Activated CD4-positive, alpha-beta T cell treated with anti-CD3 and anti-CD28 coated beads, Interleukin-2, amount 10 ng/mL, durations not matched to agents 24 days and 14 days (primary cell): ENCODE measurements at regions of chr12 and their contacts with region 1.

Region 1: GRCh38 chr12:108950991-108951739 is 69.7 kb downstream of the SVOP start:
- DNase-seq: peak; percentile 90
- H3K4me3 Mint-ChIP-seq: no peak overlapping the region
- H3K27ac Mint-ChIP-seq: no peak overlapping the region
- H3K4me1 Mint-ChIP-seq: no peaks in the 10 kb centered on the region
- H3K27me3 Mint-ChIP-seq: peaks cover 14% of the 10 kb centered on the region

Region 2: DNA sequence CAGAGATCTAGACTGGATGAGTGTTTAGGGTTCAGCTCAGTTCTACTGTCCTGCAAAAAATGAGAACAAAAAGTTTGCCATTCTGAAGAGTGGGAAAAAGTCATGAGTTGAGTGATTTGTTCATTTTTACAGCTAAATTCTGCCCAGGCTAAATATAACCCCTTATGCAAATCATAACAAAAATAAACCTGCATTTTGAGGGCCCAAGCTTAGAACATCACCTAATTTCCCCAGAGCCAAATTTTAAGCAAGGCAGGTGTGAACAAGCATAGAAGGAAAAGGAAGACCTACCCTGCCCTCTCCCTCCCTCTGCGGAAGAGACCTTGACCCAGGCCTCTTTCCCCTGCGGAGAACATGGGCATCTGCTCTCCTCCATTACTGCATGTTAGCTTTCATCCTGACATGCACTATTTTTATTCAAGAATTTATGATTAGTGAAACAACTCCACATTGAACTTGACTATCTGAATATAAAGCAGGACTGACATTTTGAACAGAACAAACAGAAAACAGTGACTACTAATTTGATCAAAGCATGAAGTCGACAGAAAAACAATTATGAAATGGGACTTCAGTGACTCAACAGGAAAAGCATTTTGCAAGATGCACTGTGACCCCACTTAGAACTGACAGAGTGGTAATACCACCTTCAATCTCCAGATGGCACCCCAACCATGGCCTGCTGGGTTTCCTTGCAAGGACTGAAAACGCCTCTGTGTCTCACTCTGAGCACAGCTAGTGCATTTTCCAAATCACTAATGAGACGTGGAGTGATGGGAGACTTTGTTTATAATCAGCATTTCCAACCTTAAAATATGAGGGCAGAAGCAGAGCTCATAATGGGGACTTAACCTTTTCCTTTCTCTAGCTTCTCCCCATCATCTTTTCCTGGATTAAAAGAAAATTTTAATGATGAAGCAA is 286.6 kb before region 1 on chr12:
- intact Hi-C with region 1: loop called (anchors 1 kb)
- DNase-seq: peak; percentile 95
- H3K4me3 Mint-ChIP-seq: peak overlapping the region; percentile 58
- H3K27ac Mint-ChIP-seq: peak overlapping the region; percentile 77
- H3K4me1 Mint-ChIP-seq: peaks cover 15% of the 10 kb centered on the region
- H3K27me3 Mint-ChIP-seq: no peaks in the 10 kb centered on the region

Region 3: DNA sequence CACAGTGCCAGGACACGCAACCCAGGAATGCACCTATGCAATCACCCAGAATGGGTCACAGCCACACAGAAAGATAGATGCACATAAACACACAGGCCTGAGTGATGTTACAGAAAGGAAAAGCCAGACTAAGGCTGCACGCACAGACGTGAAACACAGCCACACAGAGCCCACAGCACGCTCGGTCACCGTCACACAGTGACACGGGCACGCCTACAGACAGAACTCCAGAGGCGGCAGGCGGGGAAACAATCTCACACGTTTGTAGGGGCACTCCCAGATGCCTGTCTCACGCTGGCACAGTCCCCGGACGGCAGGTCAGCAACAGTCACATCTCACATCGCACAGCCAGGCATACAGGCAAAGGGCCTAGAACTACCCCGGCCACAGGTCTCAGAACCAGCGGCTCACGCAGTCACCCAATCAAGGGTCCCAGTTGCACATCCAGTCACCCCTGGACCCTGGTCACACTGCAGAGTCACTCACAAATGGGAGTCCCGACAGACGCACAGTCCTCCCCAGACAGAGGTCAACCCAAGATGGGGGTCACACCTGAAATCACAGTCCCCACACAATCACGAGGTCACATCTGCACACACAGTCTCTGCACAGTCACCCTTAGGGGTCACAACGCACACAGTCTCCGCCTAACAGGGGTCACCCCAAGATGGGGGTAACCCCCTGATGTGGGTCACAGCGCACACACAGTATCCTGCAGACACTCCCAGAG is 94.6 kb before region 1 on chr12:
- intact Hi-C with region 1: no loop called
- DNase-seq: peak; percentile 84
- H3K4me3 Mint-ChIP-seq: peak overlapping the region; percentile 91
- H3K27ac Mint-ChIP-seq: peak overlapping the region; percentile 84
- H3K4me1 Mint-ChIP-seq: peaks cover 43% of the 10 kb centered on the region
- H3K27me3 Mint-ChIP-seq: peaks cover 1% of the 10 kb centered on the region

Region 4: DNA sequence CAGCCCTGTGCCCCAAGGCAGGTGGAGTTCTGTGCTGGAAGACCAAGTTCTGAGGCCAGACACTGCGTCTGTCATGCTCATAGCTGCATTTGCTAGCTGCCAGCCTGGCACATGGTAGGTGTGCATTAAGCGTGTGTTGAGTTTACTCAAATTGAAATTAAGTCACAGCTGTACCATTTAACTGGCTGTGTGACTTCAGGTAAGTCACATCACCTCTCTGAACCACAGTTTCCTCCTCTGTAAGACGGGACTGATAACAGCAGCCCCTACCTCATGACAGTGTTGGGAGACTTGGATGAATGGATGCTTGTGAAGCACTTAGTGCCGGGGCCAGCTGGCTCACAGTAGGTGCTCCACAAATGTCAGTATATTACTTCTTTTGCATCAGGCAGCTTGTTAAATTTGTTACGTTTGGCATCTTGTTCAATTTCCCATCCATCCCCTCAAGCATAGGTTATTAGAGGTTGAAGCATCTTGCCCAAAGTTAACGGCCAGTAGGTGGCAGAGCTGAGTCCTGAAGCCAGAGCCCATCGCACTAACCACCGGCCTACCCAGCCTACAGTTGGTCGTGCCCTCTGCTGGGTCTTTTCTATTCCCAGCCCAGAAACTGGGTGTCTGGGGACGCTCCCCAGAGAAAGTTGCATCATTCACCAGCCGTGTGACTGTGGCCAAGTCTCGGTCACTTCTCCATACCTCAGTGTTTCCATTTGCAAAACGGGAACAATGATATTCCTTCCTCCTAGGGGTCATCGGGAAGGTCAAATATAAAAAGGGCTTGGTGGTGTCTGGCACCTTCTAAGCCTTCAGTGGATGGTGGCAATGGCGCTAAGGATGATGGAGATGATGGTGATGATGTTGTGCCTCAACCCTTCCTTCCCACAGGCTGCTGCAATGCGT is 66.8 kb before region 1 on chr12:
- intact Hi-C with region 1: loop called (anchors 1 kb)
- DNase-seq: peak; percentile 88
- H3K4me3 Mint-ChIP-seq: no peak overlapping the region
- H3K27ac Mint-ChIP-seq: no peak overlapping the region
- H3K4me1 Mint-ChIP-seq: no peaks in the 10 kb centered on the region
- H3K27me3 Mint-ChIP-seq: no peaks in the 10 kb centered on the region

Region 5: DNA sequence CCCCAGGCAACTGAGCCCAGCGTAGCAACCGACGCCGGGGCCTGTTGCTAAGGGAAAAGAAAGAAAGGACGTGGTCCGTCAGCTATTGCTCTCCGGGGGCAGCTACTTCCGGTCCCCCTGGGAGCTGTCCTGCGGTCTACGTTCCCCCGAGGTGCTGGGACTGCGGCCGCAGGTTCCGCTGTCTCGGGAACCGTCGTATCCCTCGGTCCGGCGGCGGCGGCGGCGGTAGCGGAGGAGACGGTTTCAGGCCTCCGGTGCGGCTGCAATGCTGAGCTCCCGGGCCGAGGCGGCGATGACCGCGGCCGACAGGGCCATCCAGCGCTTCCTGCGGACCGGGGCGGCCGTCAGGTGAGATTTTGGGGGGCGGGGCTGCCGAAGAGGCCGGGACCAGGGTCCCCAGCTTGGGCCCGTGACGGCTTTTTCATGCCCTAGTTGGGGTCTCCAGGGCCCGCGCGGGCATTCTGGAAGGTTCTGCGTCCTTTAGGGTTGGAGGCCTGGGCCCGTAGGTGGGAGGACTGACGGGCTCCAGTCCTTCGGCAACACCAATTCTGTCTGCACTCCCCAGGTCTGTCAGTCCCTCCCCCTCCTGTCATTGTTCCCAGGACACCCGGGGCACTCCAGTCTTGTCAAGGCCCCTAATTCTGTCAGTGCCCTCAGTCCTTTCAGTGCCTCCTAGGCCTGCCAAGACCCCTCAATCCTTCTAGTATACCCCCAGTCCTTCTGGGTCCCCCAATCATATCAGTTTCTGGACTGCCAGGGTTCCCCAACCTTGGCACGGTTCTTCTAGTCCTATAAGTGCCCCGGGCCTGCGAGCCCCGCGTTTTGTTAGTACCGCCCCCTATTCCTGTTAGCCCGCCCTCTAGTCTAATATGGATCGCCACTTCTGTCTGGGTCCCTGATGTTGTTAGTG is 101.5 kb after region 1 on chr12 and contains the start of gene USP30:
- intact Hi-C with region 1: no loop called
- DNase-seq: peak; percentile 95
- H3K4me3 Mint-ChIP-seq: peak within 1 kb of the TSS; percentile 86
- H3K27ac Mint-ChIP-seq: peak within 1 kb of the TSS; percentile 95
- H3K4me1 Mint-ChIP-seq: peaks cover 8% of the 10 kb centered on the region
- H3K27me3 Mint-ChIP-seq: no peaks in the 10 kb centered on the region
- total RNA-seq, gene USP30: 6.6 and 6.9 TPM in 2 replicates